ENCODE measurements at regions of chr7 and their contacts with region 1.

Region 1: GRCh38 chr7:47792521-47793121 is 155.6 kb downstream of the PKD1L1 start:
- DNase-seq: no peak
- H3K4me3 ChIP-seq: no peak overlapping the region
- H3K27ac ChIP-seq: no peak overlapping the region
- H3K4me1 ChIP-seq: no peaks in the 10 kb centered on the region
- H3K27me3 ChIP-seq: no peaks in the 10 kb centered on the region
- CTCF ChIP-seq: peak; percentile 66

Region 2: GRCh38 chr7:46630031-46630430 is 1162.6 kb before region 1 on chr7:
- intact Hi-C with region 1: no loop called
- DNase-seq: no peak
- H3K4me3 ChIP-seq: no peak overlapping the region
- H3K27ac ChIP-seq: no peak overlapping the region
- H3K4me1 ChIP-seq: no peaks in the 10 kb centered on the region
- H3K27me3 ChIP-seq: no peaks in the 10 kb centered on the region
- CTCF ChIP-seq: no peak

Region 3: DNA sequence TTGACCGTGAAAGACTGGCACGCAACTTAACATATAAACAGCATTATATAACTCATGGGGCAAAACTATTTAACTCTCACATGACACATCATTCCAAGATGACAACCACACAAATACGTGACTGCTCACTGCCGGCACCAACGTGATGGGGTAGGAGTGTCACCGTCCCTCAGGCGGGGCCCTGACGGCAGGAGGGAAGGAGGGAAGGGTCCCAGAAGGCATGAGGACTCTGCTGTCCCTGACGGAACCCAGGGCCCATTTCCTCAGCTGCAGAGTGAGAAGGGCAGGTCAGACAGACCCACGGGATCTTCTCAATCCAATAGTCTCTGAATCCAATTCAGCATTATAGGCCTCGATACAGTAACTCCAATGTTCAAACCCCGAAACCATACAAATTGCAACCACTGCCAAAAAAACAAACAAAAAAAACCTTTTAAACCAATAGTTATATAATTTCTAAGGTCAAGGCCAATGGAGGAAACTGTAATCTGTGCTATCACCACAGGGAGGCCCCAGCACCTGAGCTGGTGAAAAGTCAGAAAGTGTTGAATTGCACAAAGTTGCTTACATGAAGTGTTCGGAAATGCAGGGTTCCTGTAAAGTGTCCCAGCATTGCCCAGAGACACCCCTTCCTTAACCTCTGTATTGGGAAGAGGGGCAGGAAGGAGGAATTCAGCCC is 348.1 kb before region 1 on chr7:
- intact Hi-C with region 1: loop called (anchors 10 kb)
- DNase-seq: no peak
- H3K4me3 ChIP-seq: no peak overlapping the region
- H3K27ac ChIP-seq: peak overlapping the region; percentile 21
- H3K4me1 ChIP-seq: peaks cover 59% of the 10 kb centered on the region
- H3K27me3 ChIP-seq: no peaks in the 10 kb centered on the region
- CTCF ChIP-seq: peak; percentile 61

Region 4: GRCh38 chr7:47653550-47654351 is 138.9 kb before region 1 on chr7:
- intact Hi-C with region 1: no loop called
- DNase-seq: no peak
- H3K4me3 ChIP-seq: no peak overlapping the region
- H3K27ac ChIP-seq: no peak overlapping the region
- H3K4me1 ChIP-seq: no peaks in the 10 kb centered on the region
- H3K27me3 ChIP-seq: no peaks in the 10 kb centered on the region
- CTCF ChIP-seq: no peak

Region 5: GRCh38 chr7:47669061-47669891 is 123.3 kb before region 1 on chr7:
- intact Hi-C with region 1: no loop called
- DNase-seq: peak; percentile 63
- H3K4me3 ChIP-seq: no peak overlapping the region
- H3K27ac ChIP-seq: peak overlapping the region; percentile 36
- H3K4me1 ChIP-seq: no peaks in the 10 kb centered on the region
- H3K27me3 ChIP-seq: no peaks in the 10 kb centered on the region
- CTCF ChIP-seq: no peak